ENCODE measurements at regions of chr16 and their contacts with region 1.

Region 1: GRCh38 chr16:23060458-23061320 is 88.6 kb downstream of the USP31 start:
- DNase-seq: peak in 8 of 9 donors; percentile 9 to 48 (median 38)
- ATAC-seq: peak; percentile 74
- H3K4me3 ChIP-seq: no peak overlapping the region
- H3K4me3 Mint-ChIP-seq: no peak overlapping the region
- H3K27ac ChIP-seq: no peak overlapping the region
- H3K27ac Mint-ChIP-seq: no peak overlapping the region
- H3K4me1 ChIP-seq: no peaks in the 10 kb centered on the region
- H3K4me1 Mint-ChIP-seq: peaks cover 0 to 3% (median 0%) of the 10 kb centered on the region in 7 donors
- H3K27me3 ChIP-seq: no peaks in the 10 kb centered on the region
- H3K27me3 Mint-ChIP-seq: peaks cover 12 to 31% (median 16%) of the 10 kb centered on the region in 5 donors

Region 2: GRCh38 chr16:22898874-22899348 is 161.8 kb before region 1 on chr16:
- CTCF ChIA-PET with region 1: no interaction called
- POLR2A ChIA-PET with region 1: no interaction called
- intact Hi-C with region 1: loop called in 1 of 2 experiments (anchors 2 kb)
- DNase-seq: peak in 4 of 9 donors; percentile 2 to 65 (median 16)
- ATAC-seq: no peak
- H3K4me3 ChIP-seq: no peak overlapping the region
- H3K4me3 Mint-ChIP-seq: no peak overlapping the region
- H3K27ac ChIP-seq: no peak overlapping the region
- H3K27ac Mint-ChIP-seq: no peak overlapping the region
- H3K4me1 ChIP-seq: no peaks in the 10 kb centered on the region
- H3K4me1 Mint-ChIP-seq: no peaks in the 10 kb centered on the region
- H3K27me3 ChIP-seq: no peaks in the 10 kb centered on the region
- H3K27me3 Mint-ChIP-seq: peaks cover 7 to 44% (median 28%) of the 10 kb centered on the region in 5 donors

Region 3: GRCh38 chr16:22983614-22984013 is 77.1 kb before region 1 on chr16:
- CTCF ChIA-PET with region 1: no interaction called
- POLR2A ChIA-PET with region 1: no interaction called
- intact Hi-C with region 1: no loop called
- DNase-seq: no peak
- ATAC-seq: no peak
- H3K4me3 ChIP-seq: no peak overlapping the region
- H3K4me3 Mint-ChIP-seq: no peak overlapping the region
- H3K27ac ChIP-seq: no peak overlapping the region
- H3K27ac Mint-ChIP-seq: no peak overlapping the region
- H3K4me1 ChIP-seq: no peaks in the 10 kb centered on the region
- H3K4me1 Mint-ChIP-seq: peaks cover 0 to 2% (median 0%) of the 10 kb centered on the region in 7 donors
- H3K27me3 ChIP-seq: no peaks in the 10 kb centered on the region
- H3K27me3 Mint-ChIP-seq: peaks cover 0 to 30% (median 27%) of the 10 kb centered on the region in 5 donors

Region 4: DNA sequence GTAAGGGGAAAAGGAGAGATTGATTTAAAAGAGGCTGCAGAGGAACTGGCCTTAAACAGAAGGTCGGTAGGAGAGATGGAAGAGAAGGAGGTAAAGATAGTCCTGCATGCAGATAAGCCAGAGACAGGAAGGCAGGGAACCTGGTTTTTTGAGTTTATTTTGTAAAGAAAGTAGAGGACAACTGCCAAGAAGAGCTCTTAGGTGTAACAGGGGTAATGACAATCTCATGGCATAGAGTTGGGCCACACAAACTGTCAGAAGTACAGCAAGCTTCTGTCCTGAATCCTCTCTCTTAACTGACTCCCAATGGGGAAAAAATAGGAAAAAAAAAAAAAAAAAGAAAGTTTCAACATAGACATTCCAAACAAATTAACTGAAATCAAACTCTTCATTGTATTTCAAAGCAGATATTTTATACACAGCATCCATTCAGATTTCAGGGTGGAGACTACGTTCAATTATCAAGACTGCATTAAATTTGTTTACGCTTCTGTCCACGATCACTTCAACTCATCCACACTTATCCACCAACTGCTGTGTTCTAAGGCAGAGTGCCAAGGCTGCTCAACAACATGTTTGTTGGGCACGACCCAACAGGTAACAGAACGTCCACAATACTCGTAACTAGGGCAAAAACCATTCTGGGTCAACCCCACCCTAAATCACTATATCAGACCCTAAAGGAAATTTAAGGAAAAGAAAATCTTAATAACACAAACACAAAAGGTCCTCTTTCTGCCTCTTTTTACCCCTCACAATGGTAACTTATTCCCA is 53.6 kb after region 1 on chr16:
- CTCF ChIA-PET with region 1: no interaction called
- POLR2A ChIA-PET with region 1: no interaction called
- intact Hi-C with region 1: no loop called
- DNase-seq: no peak
- ATAC-seq: no peak
- H3K4me3 ChIP-seq: no peak overlapping the region
- H3K4me3 Mint-ChIP-seq: no peak overlapping the region
- H3K27ac ChIP-seq: no peak overlapping the region
- H3K27ac Mint-ChIP-seq: no peak overlapping the region
- H3K4me1 ChIP-seq: no peaks in the 10 kb centered on the region
- H3K4me1 Mint-ChIP-seq: peaks cover 0 to 1% (median 0%) of the 10 kb centered on the region in 7 donors
- H3K27me3 ChIP-seq: no peaks in the 10 kb centered on the region
- H3K27me3 Mint-ChIP-seq: no peaks in the 10 kb centered on the region

Region 5: DNA sequence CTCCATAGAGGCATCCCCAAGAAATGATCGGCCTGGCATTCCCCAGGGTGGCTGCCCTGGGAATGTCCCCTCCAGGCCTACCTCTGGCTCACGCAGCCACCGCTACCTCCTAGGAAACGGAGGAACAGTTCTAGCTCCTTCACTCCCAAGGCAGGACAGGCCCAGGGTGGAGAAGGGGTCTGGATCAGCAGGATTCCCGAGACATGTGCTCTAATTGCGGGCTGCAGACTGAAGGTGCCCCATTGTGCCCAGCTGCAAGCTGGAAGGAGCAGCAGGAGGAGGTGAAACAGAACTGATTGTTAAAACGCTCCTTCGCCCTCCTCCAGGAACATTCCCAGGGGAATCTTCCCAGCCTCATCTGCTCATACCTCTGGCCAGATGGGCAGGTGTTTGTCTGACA is 162.7 kb after region 1 on chr16:
- CTCF ChIA-PET with region 1: no interaction called
- POLR2A ChIA-PET with region 1: no interaction called
- intact Hi-C with region 1: no loop called
- DNase-seq: no peak
- ATAC-seq: no peak
- H3K4me3 ChIP-seq: no peak overlapping the region
- H3K4me3 Mint-ChIP-seq: no peak overlapping the region
- H3K27ac ChIP-seq: no peak overlapping the region
- H3K27ac Mint-ChIP-seq: no peak overlapping the region
- H3K4me1 ChIP-seq: no peaks in the 10 kb centered on the region
- H3K4me1 Mint-ChIP-seq: no peaks in the 10 kb centered on the region
- H3K27me3 ChIP-seq: no peaks in the 10 kb centered on the region
- H3K27me3 Mint-ChIP-seq: peaks cover 5 to 32% (median 21%) of the 10 kb centered on the region in 5 donors

Measured in naive thymus-derived CD4-positive, alpha-beta T cell (primary cell).